Left cardiac atrium (tissue), 4 donors: ENCODE measurements at regions of chr12 and their contacts with region 1.

Region 1: DNA sequence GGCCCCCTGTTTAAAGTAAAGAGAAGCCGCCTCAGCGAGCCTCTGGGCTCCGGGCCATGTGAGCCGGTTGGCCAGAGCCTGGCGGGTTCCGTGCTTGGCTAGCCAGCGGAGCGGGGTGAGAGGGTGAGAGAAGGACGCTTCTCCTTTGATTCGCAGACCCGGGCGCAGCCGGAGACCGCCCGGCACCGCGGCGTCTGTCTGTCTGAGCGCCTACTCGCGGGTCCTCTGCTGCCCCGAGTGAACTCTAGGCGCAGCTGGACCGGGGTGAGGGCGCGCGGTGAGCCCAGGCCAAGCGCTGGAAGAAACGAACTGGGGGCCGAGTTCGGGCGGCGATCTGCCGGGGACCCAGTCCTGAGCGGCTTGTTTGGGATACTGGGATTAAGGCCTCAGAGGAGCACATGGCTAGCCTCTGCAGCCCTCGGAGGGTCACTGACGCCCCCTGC is 41.4 kb upstream of the TBX5 start:
- DNase-seq: peak; percentile 47
- ATAC-seq: peak; percentile 13 to 20

Region 2: GRCh38 chr12:114343585-114344302 is 103.6 kb before region 1 on chr12:
- intact Hi-C with region 1: no loop called
- DNase-seq: no peak
- ATAC-seq: no peak

Region 3: GRCh38 chr12:114408886-114409851 is 38.1 kb before region 1 on chr12:
- intact Hi-C with region 1: loop called (anchors 5 kb)
- DNase-seq: peak; percentile 54
- ATAC-seq: peak; percentile 30 to 44